ENCODE measurements at regions of chr17 and their contacts with region 1.

Region 1: GRCh38 chr17:48543107-48543853 is 1.6 kb downstream of the HOXB2 start:
- DNase-seq: peak in 8 of 9 experiments; percentile 36 to 78 (median 58)
- ATAC-seq: peak; percentile 56
- H3K4me3 ChIP-seq: peak overlapping the region; percentile 77 to 80
- H3K4me3 Mint-ChIP-seq: peak overlapping the region; percentile 89
- H3K27ac ChIP-seq: peak overlapping the region; percentile 49 to 96
- H3K27ac Mint-ChIP-seq: peak overlapping the region; percentile 92
- H3K4me1 ChIP-seq: peaks cover 40% of the 10 kb centered on the region
- H3K4me1 Mint-ChIP-seq: peaks cover 52% of the 10 kb centered on the region
- H3K27me3 ChIP-seq: peaks cover 0 to 3% of the 10 kb centered on the region in 2 experiments
- H3K27me3 Mint-ChIP-seq: no peaks in the 10 kb centered on the region
- CTCF ChIP-seq: no peak

Region 2: GRCh38 chr17:48392857-48393256 is 150.4 kb before region 1 on chr17:
- CTCF ChIA-PET with region 1: no interaction called
- POLR2A ChIA-PET with region 1: no interaction called
- intact Hi-C with region 1: no loop called
- DNase-seq: no peak
- ATAC-seq: no peak
- H3K4me3 ChIP-seq: no peak overlapping the region
- H3K4me3 Mint-ChIP-seq: no peak overlapping the region
- H3K27ac ChIP-seq: no peak overlapping the region
- H3K27ac Mint-ChIP-seq: no peak overlapping the region
- H3K4me1 ChIP-seq: no peaks in the 10 kb centered on the region
- H3K4me1 Mint-ChIP-seq: peaks cover 59% of the 10 kb centered on the region
- H3K27me3 ChIP-seq: no peaks in the 10 kb centered on the region
- H3K27me3 Mint-ChIP-seq: no peaks in the 10 kb centered on the region
- CTCF ChIP-seq: no peak

Region 3: DNA sequence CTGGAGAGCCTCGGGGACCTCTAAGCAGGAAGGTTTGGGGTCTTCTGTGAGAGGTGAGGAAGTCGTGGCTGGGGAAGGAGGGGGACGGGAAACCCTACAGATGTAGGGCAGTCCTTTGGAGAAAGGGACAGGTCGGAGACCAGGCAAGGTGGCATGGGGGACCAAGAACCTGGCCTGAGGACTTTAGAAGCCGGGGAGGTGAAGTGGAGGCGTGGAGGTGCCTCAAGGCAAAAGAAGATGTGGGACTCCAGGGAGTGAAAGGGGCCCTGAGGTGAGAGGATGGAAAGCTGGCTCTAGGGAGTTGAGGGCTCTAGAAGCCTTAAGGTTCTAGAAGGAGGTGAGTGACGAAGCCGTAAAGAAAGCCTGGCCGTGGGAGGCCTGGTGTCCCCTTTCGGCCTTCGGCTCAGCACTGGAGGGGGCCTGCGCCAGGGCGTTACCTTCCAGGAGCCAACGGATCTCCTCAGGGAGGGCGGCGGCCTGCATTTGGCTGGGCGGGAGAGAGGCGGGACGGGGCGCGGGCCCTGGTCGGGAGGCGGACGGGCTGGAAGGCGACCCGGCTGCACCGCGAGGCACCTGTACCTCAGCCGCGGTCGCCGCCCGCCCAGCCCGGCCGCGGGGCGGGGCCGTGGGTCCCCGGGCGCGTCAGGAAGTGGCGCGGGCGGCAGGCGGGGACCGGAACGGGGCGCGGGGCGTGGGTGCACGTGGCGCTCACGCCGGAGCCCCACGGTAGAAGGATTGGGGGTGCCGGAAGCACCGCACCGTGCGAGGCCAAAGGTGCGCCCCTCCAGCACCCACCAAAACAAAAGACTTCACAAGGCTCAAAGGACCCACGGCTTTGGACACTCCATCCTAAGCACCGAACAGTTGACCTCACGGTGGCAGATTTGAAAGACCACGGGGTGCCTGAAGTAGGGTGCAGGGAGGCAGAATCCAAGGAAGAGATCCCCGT is 113.4 kb before region 1 on chr17 and contains the start of gene SKAP1:
- CTCF ChIA-PET with region 1: no interaction called
- POLR2A ChIA-PET with region 1: interaction called, 4 read pairs
- intact Hi-C with region 1: loop called in 1 of 2 experiments (anchors 5 kb)
- DNase-seq: peak; percentile 33 to 84 (median 66)
- ATAC-seq: peak; percentile 68
- H3K4me3 ChIP-seq: peak within 1 kb of the TSS; percentile 88 to 93
- H3K4me3 Mint-ChIP-seq: peak within 1 kb of the TSS; percentile 99
- H3K27ac ChIP-seq: peak within 1 kb of the TSS; percentile 79 to 91
- H3K27ac Mint-ChIP-seq: peak within 1 kb of the TSS; percentile 99
- H3K4me1 ChIP-seq: peaks cover 63% of the 10 kb centered on the region
- H3K4me1 Mint-ChIP-seq: peaks cover 88% of the 10 kb centered on the region
- H3K27me3 ChIP-seq: no peaks in the 10 kb centered on the region
- H3K27me3 Mint-ChIP-seq: no peaks in the 10 kb centered on the region
- CTCF ChIP-seq: no peak
- total RNA-seq, gene SKAP1: 59.9 to 62.4 TPM

Region 4: GRCh38 chr17:48441231-48441711 is 102.0 kb before region 1 on chr17:
- CTCF ChIA-PET with region 1: no interaction called
- POLR2A ChIA-PET with region 1: interaction called, 3 read pairs
- intact Hi-C with region 1: loop called in 1 of 2 experiments (anchors 5 kb)
- DNase-seq: peak in 5 of 9 experiments; percentile 35 to 92 (median 50)
- ATAC-seq: peak; percentile 67
- H3K4me3 ChIP-seq: peak overlapping the region; percentile 0 to 32
- H3K4me3 Mint-ChIP-seq: peak overlapping the region; percentile 68
- H3K27ac ChIP-seq: peak overlapping the region; percentile 58 to 85
- H3K27ac Mint-ChIP-seq: peak overlapping the region; percentile 97
- H3K4me1 ChIP-seq: peaks cover 94% of the 10 kb centered on the region
- H3K4me1 Mint-ChIP-seq: peaks cover 94% of the 10 kb centered on the region
- H3K27me3 ChIP-seq: no peaks in the 10 kb centered on the region
- H3K27me3 Mint-ChIP-seq: no peaks in the 10 kb centered on the region
- CTCF ChIP-seq: no peak

Region 5: DNA sequence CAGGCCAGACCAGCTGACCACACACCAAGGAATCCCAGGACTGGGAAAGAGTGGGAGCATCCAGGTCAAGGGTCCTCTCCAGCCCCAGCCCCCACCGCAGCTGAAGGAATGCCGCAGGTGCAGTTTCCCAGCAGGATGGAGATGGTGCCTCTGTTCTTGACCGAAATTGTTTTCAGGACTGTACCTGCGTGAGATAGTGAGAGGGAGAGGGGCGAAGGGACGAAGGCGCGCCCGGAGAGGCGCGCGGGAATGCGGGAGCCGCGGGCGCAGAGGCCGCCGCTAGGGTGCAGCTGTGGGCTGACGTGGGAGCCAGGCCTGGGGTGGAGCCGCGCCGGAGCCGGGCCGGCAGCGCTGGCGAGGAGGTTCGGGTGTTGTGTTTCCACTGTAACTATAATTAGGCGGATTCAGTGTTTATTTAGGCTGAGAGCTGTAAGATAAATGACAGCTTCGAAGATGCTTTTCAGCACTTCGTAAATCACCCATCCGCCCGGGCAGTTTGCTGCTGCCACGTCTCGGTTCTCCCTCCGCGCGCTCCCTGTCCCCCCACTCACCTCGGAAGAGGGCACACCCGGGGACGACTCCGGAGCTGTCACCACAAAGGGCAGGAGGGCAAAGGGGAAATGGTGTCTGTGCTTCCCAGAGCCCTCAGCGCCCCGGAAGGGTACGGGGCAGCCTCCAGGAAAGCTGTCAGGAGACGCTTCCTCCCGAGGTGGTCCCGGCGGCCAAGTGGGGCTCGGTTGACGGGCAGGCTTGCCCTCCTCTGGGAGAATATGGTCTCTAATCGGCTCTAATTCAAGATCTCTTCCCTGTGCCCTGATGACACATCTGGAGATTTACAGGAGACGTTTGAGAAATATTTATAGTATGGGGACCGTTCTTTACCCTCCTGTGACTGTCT is 50.6 kb before region 1 on chr17:
- CTCF ChIA-PET with region 1: interaction called, 11 read pairs
- POLR2A ChIA-PET with region 1: no interaction called
- intact Hi-C with region 1: loop called in 1 of 2 experiments (anchors 5 kb)
- DNase-seq: peak; percentile 49 to 80 (median 67)
- ATAC-seq: peak; percentile 96
- H3K4me3 ChIP-seq: peak overlapping the region; percentile 38 to 41
- H3K4me3 Mint-ChIP-seq: peak overlapping the region; percentile 61
- H3K27ac ChIP-seq: no peak overlapping the region
- H3K27ac Mint-ChIP-seq: no peak overlapping the region
- H3K4me1 ChIP-seq: no peaks in the 10 kb centered on the region
- H3K4me1 Mint-ChIP-seq: peaks cover 5% of the 10 kb centered on the region
- H3K27me3 ChIP-seq: peaks cover 0 to 7% of the 10 kb centered on the region in 2 experiments
- H3K27me3 Mint-ChIP-seq: peaks cover 26% of the 10 kb centered on the region
- CTCF ChIP-seq: peak; percentile 83

Region 6: GRCh38 chr17:48510761-48511604 is 32.3 kb before region 1 on chr17:
- CTCF ChIA-PET with region 1: no interaction called
- POLR2A ChIA-PET with region 1: interaction called, 5 read pairs
- intact Hi-C with region 1: loop called (anchors 2 kb)
- DNase-seq: peak in 3 of 9 experiments; percentile 35 to 61 (median 48)
- ATAC-seq: peak; percentile 71
- H3K4me3 ChIP-seq: no peak overlapping the region
- H3K4me3 Mint-ChIP-seq: no peak overlapping the region
- H3K27ac ChIP-seq: no peak overlapping the region
- H3K27ac Mint-ChIP-seq: no peak overlapping the region
- H3K4me1 ChIP-seq: peaks cover 18% of the 10 kb centered on the region
- H3K4me1 Mint-ChIP-seq: peaks cover 36% of the 10 kb centered on the region
- H3K27me3 ChIP-seq: peaks cover 3 to 4% of the 10 kb centered on the region in 2 experiments
- H3K27me3 Mint-ChIP-seq: peaks cover 5% of the 10 kb centered on the region
- CTCF ChIP-seq: no peak

Region 7: GRCh38 chr17:48577946-48578615 is 34.8 kb after region 1 on chr17 and contains the start of gene HOXB4:
- CTCF ChIA-PET with region 1: no interaction called
- POLR2A ChIA-PET with region 1: interaction called, 5 read pairs
- intact Hi-C with region 1: loop called (anchors 1 to 2 kb)
- DNase-seq: peak; percentile 35 to 87 (median 72)
- ATAC-seq: peak; percentile 76
- H3K4me3 ChIP-seq: peak within 1 kb of the TSS; percentile 80 to 87
- H3K4me3 Mint-ChIP-seq: peak within 1 kb of the TSS; percentile 90
- H3K27ac ChIP-seq: peak within 1 kb of the TSS in 1 of 2 experiments; percentile 75
- H3K27ac Mint-ChIP-seq: peak within 1 kb of the TSS; percentile 86
- H3K4me1 ChIP-seq: peaks cover 25% of the 10 kb centered on the region
- H3K4me1 Mint-ChIP-seq: peaks cover 40% of the 10 kb centered on the region
- H3K27me3 ChIP-seq: peaks cover 26 to 39% of the 10 kb centered on the region in 2 experiments
- H3K27me3 Mint-ChIP-seq: peaks cover 40% of the 10 kb centered on the region
- CTCF ChIP-seq: no peak
- total RNA-seq, gene HOXB4: 0.57 to 0.64 TPM

Measured in CD8-positive, alpha-beta T cell (primary cell).